ENCODE measurements at regions of chr4 and their contacts with region 1.

Region 1: DNA sequence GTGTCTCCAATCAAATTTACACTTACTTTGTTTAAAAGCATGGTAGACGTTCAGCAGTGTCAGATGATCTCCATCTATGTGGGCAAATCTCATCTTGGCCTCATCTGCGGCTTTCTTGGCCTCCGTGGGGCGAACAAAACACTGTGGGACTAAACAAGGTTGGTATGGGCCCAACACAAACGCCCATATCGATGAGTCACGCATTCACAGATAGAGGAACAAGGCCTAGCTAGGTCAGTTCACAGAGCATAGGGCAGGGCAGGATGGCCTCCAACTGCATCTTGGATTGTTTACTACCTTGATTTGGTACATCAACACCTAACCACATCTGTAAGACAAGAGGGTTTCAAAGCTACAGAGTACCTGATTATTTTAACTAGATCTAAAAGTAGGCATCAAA is 47.3 kb downstream of the DHX15 start:
- DNase-seq: no peak
- H3K4me3 ChIP-seq: no peak overlapping the region
- H3K27ac ChIP-seq: no peak overlapping the region
- H3K4me1 ChIP-seq: peaks cover 0 to 4% (median 3%) of the 10 kb centered on the region in 4 experiments
- H3K27me3 ChIP-seq: no peaks in the 10 kb centered on the region

Region 2: GRCh38 chr4:24551492-24552289 is 14.7 kb after region 1 on chr4:
- CTCF ChIA-PET with region 1: interaction called, 17 read pairs
- POLR2A ChIA-PET with region 1: no interaction called
- DNase-seq: peak; percentile 38 to 68 (median 65)
- H3K4me3 ChIP-seq: no peak overlapping the region
- H3K27ac ChIP-seq: peak overlapping the region in 1 of 2 experiments; percentile 22
- H3K4me1 ChIP-seq: peaks cover 0 to 4% (median 0%) of the 10 kb centered on the region in 4 experiments
- H3K27me3 ChIP-seq: no peaks in the 10 kb centered on the region

Region 3: GRCh38 chr4:24973733-24974601 is 436.9 kb after region 1 on chr4:
- CTCF ChIA-PET with region 1: no interaction called
- POLR2A ChIA-PET with region 1: no interaction called
- DNase-seq: no peak
- H3K4me3 ChIP-seq: no peak overlapping the region
- H3K27ac ChIP-seq: no peak overlapping the region
- H3K4me1 ChIP-seq: peaks cover 5 to 28% (median 22%) of the 10 kb centered on the region in 4 experiments
- H3K27me3 ChIP-seq: no peaks in the 10 kb centered on the region